Naive thymus-derived CD4-positive, alpha-beta T cell (primary cell): ENCODE measurements at regions of chr6 and their contacts with region 1.

Region 1: GRCh38 chr6:160013987-160014868 is 45.3 kb downstream of the IGF2R start:
- DNase-seq: peak in 7 of 9 donors; percentile 12 to 31 (median 25)
- ATAC-seq: peak; percentile 72
- H3K4me3 ChIP-seq: peak overlapping the region; percentile 24
- H3K4me3 Mint-ChIP-seq: peak overlapping the region; percentile 50 to 86 (median 75)
- H3K27ac ChIP-seq: peak overlapping the region; percentile 52
- H3K27ac Mint-ChIP-seq: peak overlapping the region; percentile 82 to 96 (median 89)
- H3K4me1 ChIP-seq: peaks cover 33 to 39% of the 10 kb centered on the region in 2 donors
- H3K4me1 Mint-ChIP-seq: peaks cover 49 to 82% (median 69%) of the 10 kb centered on the region in 7 donors
- H3K27me3 ChIP-seq: no peaks in the 10 kb centered on the region
- H3K27me3 Mint-ChIP-seq: no peaks in the 10 kb centered on the region

Region 2: DNA sequence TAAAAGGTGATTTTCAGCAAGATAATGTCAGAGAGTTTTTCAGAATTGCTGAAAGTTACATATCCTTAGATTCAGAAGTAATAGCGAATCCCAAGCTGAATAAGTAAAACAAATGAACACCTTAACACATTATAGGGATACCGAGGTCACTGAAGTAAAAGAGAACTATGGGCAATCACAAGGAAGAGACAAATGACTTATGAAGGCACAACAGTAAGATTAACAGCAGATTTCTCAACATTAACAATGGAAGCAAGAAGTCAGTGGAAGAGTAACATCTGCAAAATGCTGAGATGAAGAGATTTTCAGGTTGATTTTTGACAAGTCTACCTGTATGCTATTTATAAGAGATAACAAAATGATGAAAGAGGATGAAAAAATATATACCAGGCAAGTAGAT is 1109.0 kb before region 1 on chr6:
- CTCF ChIA-PET with region 1: no interaction called
- POLR2A ChIA-PET with region 1: no interaction called
- intact Hi-C with region 1: no loop called
- DNase-seq: no peak
- ATAC-seq: no peak
- H3K4me3 ChIP-seq: no peak overlapping the region
- H3K4me3 Mint-ChIP-seq: no peak overlapping the region
- H3K27ac ChIP-seq: no peak overlapping the region
- H3K27ac Mint-ChIP-seq: peak overlapping the region in 2 of 9 donors; percentile 7 to 8
- H3K4me1 ChIP-seq: peaks cover 0 to 7% of the 10 kb centered on the region in 2 donors
- H3K4me1 Mint-ChIP-seq: peaks cover 0 to 8% (median 5%) of the 10 kb centered on the region in 7 donors
- H3K27me3 ChIP-seq: no peaks in the 10 kb centered on the region
- H3K27me3 Mint-ChIP-seq: peaks cover 0 to 3% (median 0%) of the 10 kb centered on the region in 5 donors

Region 3: DNA sequence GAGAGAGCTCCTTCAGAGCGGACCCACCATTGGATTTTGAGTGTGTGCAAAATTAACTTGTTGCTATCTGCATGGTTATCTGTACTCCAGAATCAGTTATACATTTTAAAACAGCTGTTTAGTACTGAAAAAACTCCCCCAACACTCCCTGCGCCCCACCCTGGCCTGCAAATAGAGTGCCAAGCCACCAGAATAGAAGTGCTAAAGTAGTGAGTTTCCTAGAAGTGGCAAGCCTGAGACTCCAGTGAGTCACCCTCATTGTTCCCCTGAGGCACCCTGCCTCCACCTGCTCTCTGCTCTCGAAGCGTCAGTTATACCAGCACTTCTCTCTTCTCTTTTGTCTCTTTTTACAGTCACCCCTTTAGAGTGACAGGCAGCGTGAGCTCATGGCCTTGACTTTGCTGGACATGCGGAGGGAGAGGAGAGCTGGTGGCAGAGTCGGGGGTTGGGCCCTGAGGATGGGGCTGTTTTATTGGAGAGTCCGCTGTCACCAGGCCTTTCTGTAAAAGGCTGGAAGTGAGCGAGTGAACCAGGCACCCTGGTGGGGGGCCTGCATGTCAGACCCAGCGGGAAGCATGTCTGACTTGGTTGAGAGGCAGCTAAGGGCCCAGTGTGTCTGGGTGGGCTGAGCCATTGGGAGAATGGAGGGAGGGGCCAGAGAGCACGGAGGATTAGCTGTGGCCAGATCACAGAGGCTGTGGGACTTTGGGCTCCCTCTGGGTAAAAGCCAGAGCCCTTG is 34.9 kb before region 1 on chr6:
- CTCF ChIA-PET with region 1: no interaction called
- POLR2A ChIA-PET with region 1: interaction called, 6 read pairs
- intact Hi-C with region 1: loop called (anchors 1 kb)
- DNase-seq: peak in 1 of 9 donors; percentile 51
- ATAC-seq: peak; percentile 64
- H3K4me3 ChIP-seq: no peak overlapping the region
- H3K4me3 Mint-ChIP-seq: peak overlapping the region; percentile 8 to 82 (median 39)
- H3K27ac ChIP-seq: no peak overlapping the region
- H3K27ac Mint-ChIP-seq: peak overlapping the region; percentile 60 to 96 (median 86)
- H3K4me1 ChIP-seq: peaks cover 54 to 79% of the 10 kb centered on the region in 2 donors
- H3K4me1 Mint-ChIP-seq: peaks cover 78 to 99% (median 96%) of the 10 kb centered on the region in 7 donors
- H3K27me3 ChIP-seq: no peaks in the 10 kb centered on the region
- H3K27me3 Mint-ChIP-seq: no peaks in the 10 kb centered on the region

Region 4: GRCh38 chr6:159996626-159997497 is 17.4 kb before region 1 on chr6:
- CTCF ChIA-PET with region 1: no interaction called
- POLR2A ChIA-PET with region 1: interaction called, 4 read pairs
- intact Hi-C with region 1: loop called (anchors 1 to 2 kb)
- DNase-seq: no peak
- ATAC-seq: peak; percentile 24
- H3K4me3 ChIP-seq: no peak overlapping the region
- H3K4me3 Mint-ChIP-seq: no peak overlapping the region
- H3K27ac ChIP-seq: no peak overlapping the region
- H3K27ac Mint-ChIP-seq: no peak overlapping the region
- H3K4me1 ChIP-seq: peaks cover 6 to 19% of the 10 kb centered on the region in 2 donors
- H3K4me1 Mint-ChIP-seq: peaks cover 53 to 76% (median 71%) of the 10 kb centered on the region in 7 donors
- H3K27me3 ChIP-seq: no peaks in the 10 kb centered on the region
- H3K27me3 Mint-ChIP-seq: no peaks in the 10 kb centered on the region

Region 5: GRCh38 chr6:160002882-160003281 is 11.3 kb before region 1 on chr6:
- CTCF ChIA-PET with region 1: no interaction called
- POLR2A ChIA-PET with region 1: interaction called, 4 read pairs
- intact Hi-C with region 1: loop called (anchors 1 to 2 kb)
- DNase-seq: no peak
- ATAC-seq: no peak
- H3K4me3 ChIP-seq: no peak overlapping the region
- H3K4me3 Mint-ChIP-seq: no peak overlapping the region
- H3K27ac ChIP-seq: no peak overlapping the region
- H3K27ac Mint-ChIP-seq: no peak overlapping the region
- H3K4me1 ChIP-seq: peaks cover 6 to 19% of the 10 kb centered on the region in 2 donors
- H3K4me1 Mint-ChIP-seq: peaks cover 46 to 69% (median 59%) of the 10 kb centered on the region in 7 donors
- H3K27me3 ChIP-seq: no peaks in the 10 kb centered on the region
- H3K27me3 Mint-ChIP-seq: no peaks in the 10 kb centered on the region

Region 6: DNA sequence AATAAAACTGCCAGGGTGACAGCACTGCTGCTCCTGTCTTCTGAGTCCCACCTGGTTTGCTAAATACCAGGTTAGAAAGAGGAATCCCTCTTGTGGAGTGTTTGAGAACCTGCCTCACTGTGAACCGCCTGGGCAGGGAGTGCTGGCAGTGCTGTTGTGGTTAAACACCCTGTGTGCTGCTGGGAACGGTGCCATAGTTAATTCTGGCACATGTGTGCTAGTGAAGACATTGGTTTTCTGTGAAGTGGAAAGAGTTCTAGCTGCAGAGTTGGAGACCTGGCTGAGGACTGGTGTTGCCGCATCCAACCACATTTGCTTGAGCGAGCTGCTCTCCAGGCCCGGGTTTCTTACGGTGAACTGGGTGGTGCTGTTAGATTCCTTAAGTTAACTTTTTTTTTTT is 27.4 kb after region 1 on chr6:
- CTCF ChIA-PET with region 1: no interaction called
- POLR2A ChIA-PET with region 1: interaction called, 3 read pairs
- intact Hi-C with region 1: loop called in 1 of 2 experiments (anchors 2 kb)
- DNase-seq: peak in 2 of 9 donors; percentile 17 to 27
- ATAC-seq: peak; percentile 29
- H3K4me3 ChIP-seq: no peak overlapping the region
- H3K4me3 Mint-ChIP-seq: no peak overlapping the region
- H3K27ac ChIP-seq: no peak overlapping the region
- H3K27ac Mint-ChIP-seq: peak overlapping the region in 1 of 9 donors; percentile 39
- H3K4me1 ChIP-seq: peaks cover 0 to 7% of the 10 kb centered on the region in 2 donors
- H3K4me1 Mint-ChIP-seq: peaks cover 5 to 35% (median 30%) of the 10 kb centered on the region in 7 donors
- H3K27me3 ChIP-seq: no peaks in the 10 kb centered on the region
- H3K27me3 Mint-ChIP-seq: no peaks in the 10 kb centered on the region

Region 7: GRCh38 chr6:160069050-160069454 is 54.8 kb after region 1 on chr6:
- CTCF ChIA-PET with region 1: no interaction called
- POLR2A ChIA-PET with region 1: no interaction called
- intact Hi-C with region 1: loop called in 1 of 2 experiments (anchors 2 kb)
- DNase-seq: peak in 5 of 9 donors; percentile 9 to 36 (median 21)
- ATAC-seq: peak; percentile 63
- H3K4me3 ChIP-seq: peak overlapping the region; percentile 13
- H3K4me3 Mint-ChIP-seq: peak overlapping the region; percentile 18 to 69 (median 56)
- H3K27ac ChIP-seq: no peak overlapping the region
- H3K27ac Mint-ChIP-seq: peak overlapping the region in 3 of 9 donors; percentile 11 to 31 (median 17)
- H3K4me1 ChIP-seq: peaks cover 15 to 20% of the 10 kb centered on the region in 2 donors
- H3K4me1 Mint-ChIP-seq: peaks cover 24 to 63% (median 32%) of the 10 kb centered on the region in 7 donors
- H3K27me3 ChIP-seq: no peaks in the 10 kb centered on the region
- H3K27me3 Mint-ChIP-seq: no peaks in the 10 kb centered on the region

Region 8: DNA sequence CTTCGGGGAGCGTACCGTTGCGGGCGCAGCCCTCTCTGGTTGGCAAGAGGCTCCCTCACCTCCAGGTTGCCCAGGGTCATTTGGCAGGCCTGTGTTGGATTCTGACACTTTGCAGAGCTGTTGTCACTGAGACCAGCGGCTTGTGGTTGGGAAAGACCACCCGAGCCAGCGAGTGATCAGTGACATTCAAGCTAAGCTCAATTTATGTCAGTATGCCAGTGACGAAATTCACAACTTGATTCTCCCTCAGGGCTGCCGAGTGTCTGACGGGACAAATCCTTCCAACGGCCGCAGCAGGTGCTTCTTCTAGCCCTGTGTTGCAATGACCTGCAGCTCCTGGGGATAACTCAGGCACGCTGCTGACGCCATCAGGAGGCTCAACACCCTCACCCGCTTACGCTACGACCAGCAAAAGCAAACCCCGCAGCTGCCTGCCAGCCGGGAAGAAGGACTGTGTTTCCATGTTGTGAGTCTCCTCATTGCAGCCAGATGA is 261.3 kb after region 1 on chr6:
- CTCF ChIA-PET with region 1: no interaction called
- POLR2A ChIA-PET with region 1: no interaction called
- intact Hi-C with region 1: no loop called
- DNase-seq: no peak
- ATAC-seq: no peak
- H3K4me3 ChIP-seq: no peak overlapping the region
- H3K4me3 Mint-ChIP-seq: no peak overlapping the region
- H3K27ac ChIP-seq: no peak overlapping the region
- H3K27ac Mint-ChIP-seq: no peak overlapping the region
- H3K4me1 ChIP-seq: no peaks in the 10 kb centered on the region
- H3K4me1 Mint-ChIP-seq: no peaks in the 10 kb centered on the region
- H3K27me3 ChIP-seq: no peaks in the 10 kb centered on the region
- H3K27me3 Mint-ChIP-seq: peaks cover 0 to 13% (median 2%) of the 10 kb centered on the region in 5 donors

Region 9: GRCh38 chr6:160462551-160463109 is 448.4 kb after region 1 on chr6:
- CTCF ChIA-PET with region 1: no interaction called
- POLR2A ChIA-PET with region 1: no interaction called
- intact Hi-C with region 1: loop called in 1 of 2 experiments (anchors 2 kb)
- DNase-seq: peak in 8 of 9 donors; percentile 69 to 93 (median 90)
- ATAC-seq: peak; percentile 95
- H3K4me3 ChIP-seq: peak overlapping the region; percentile 47
- H3K4me3 Mint-ChIP-seq: peak overlapping the region; percentile 60 to 89 (median 72)
- H3K27ac ChIP-seq: no peak overlapping the region
- H3K27ac Mint-ChIP-seq: peak overlapping the region; percentile 53 to 98 (median 88)
- H3K4me1 ChIP-seq: peaks cover 50 to 56% of the 10 kb centered on the region in 2 donors
- H3K4me1 Mint-ChIP-seq: peaks cover 33 to 81% (median 71%) of the 10 kb centered on the region in 7 donors
- H3K27me3 ChIP-seq: no peaks in the 10 kb centered on the region
- H3K27me3 Mint-ChIP-seq: peaks cover 0 to 52% (median 10%) of the 10 kb centered on the region in 5 donors